ENCODE measurements at regions of chr3 and their contacts with region 1.

Region 1: DNA sequence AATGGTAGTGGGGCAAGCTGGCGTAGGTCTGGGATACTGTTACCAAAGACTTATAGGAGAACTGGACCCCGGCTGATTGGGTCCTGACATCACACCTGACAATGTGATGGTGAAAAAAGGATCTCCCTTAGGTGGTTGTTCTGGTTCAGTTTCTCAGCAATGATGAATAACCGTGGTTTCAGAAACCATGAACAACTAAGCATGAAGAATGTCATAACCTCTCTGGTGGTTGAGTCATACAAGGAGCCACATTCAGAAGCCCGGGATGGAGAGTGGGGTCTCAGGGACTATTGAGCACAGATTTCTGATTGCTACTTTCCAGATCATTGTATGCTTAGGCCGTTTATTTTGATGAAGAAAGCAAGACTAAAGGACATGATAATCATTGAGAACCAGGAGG is 17.4 kb downstream of the GPR160 start:
- DNase-seq: peak; percentile 45
- ATAC-seq: peak; percentile 70
- H3K4me3 Mint-ChIP-seq: no peak overlapping the region
- H3K27ac Mint-ChIP-seq: no peak overlapping the region
- H3K4me1 Mint-ChIP-seq: peaks cover 41% of the 10 kb centered on the region
- H3K27me3 Mint-ChIP-seq: no peaks in the 10 kb centered on the region

Region 2: GRCh38 chr3:169812332-169813235 is 242.6 kb before region 1 on chr3 and contains the starts of genes LRRC34 and LRRIQ4:
- CTCF ChIA-PET with region 1: no interaction called
- POLR2A ChIA-PET with region 1: no interaction called
- intact Hi-C with region 1: loop called in 1 of 2 experiments (anchors 5 kb)
- DNase-seq: peak; percentile 90
- ATAC-seq: peak; percentile 77
- H3K4me3 Mint-ChIP-seq: peak within 1 kb of the TSS; percentile 77
- H3K27ac Mint-ChIP-seq: peak within 1 kb of the TSS; percentile 82
- H3K4me1 Mint-ChIP-seq: peaks cover 27% of the 10 kb centered on the region
- H3K27me3 Mint-ChIP-seq: peaks cover 2% of the 10 kb centered on the region
- total RNA-seq, gene LRRC34: 3.8 TPM
- total RNA-seq, gene LRRIQ4: 0.09 to 0.12 TPM

Region 3: DNA sequence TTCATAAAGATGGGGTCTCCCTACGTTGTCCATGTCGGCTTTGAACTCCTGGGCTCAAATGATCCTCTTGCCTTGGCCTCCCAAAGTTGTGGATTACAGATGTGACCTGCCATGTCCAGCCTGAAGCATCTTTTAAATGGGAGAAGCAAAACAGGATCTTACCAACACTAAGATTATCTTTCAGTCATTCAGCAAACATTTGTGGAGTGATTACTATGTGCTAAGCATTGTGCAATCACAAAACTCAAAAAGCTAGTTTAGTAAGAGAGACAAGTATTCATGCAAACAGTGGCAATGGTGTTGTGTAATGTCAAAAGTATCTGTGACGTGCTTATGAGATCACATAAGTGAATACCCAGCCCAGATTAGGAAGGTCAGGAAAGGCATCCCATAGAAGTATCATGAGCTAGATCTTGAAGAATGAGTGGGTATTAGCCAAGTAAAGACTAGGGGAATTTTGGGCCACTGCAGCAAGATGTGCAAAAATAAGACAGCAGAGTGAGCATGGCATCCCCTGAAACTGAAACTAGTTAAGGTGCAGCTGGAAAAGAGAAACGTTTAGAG is 56.6 kb before region 1 on chr3:
- CTCF ChIA-PET with region 1: no interaction called
- POLR2A ChIA-PET with region 1: no interaction called
- intact Hi-C with region 1: loop called (anchors 1 to 2 kb)
- DNase-seq: peak; percentile 24
- ATAC-seq: peak; percentile 61
- H3K4me3 Mint-ChIP-seq: no peak overlapping the region
- H3K27ac Mint-ChIP-seq: peak overlapping the region; percentile 89
- H3K4me1 Mint-ChIP-seq: peaks cover 35% of the 10 kb centered on the region
- H3K27me3 Mint-ChIP-seq: no peaks in the 10 kb centered on the region

Region 4: GRCh38 chr3:170089862-170090600 is 34.8 kb after region 1 on chr3:
- CTCF ChIA-PET with region 1: no interaction called
- POLR2A ChIA-PET with region 1: no interaction called
- intact Hi-C with region 1: loop called in 1 of 2 experiments (anchors 5 kb)
- DNase-seq: no peak
- ATAC-seq: peak; percentile 58
- H3K4me3 Mint-ChIP-seq: no peak overlapping the region
- H3K27ac Mint-ChIP-seq: peak overlapping the region; percentile 42
- H3K4me1 Mint-ChIP-seq: peaks cover 9% of the 10 kb centered on the region
- H3K27me3 Mint-ChIP-seq: no peaks in the 10 kb centered on the region

Region 5: DNA sequence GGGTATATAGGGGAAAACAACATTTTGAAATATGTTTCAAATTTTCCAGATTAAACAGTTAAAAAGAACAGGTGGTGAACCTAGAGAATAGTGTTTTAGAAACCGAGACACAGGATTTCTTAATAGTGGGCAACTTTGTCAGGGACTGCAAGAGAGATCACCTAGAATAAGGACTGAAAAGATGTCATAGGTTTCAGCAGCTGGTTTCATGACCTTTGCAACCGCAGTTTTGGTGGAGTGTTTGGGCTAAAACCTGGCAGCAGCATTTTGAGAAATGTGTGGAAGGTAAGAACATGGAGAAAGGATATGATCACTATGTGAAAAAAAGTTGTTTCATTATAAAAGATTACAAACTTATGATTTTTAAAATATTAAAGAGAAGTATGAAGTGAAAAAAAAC is 201.9 kb after region 1 on chr3:
- CTCF ChIA-PET with region 1: no interaction called
- POLR2A ChIA-PET with region 1: no interaction called
- intact Hi-C with region 1: loop called in 1 of 2 experiments (anchors 2 kb)
- DNase-seq: peak; percentile 59
- ATAC-seq: peak; percentile 66
- H3K4me3 Mint-ChIP-seq: no peak overlapping the region
- H3K27ac Mint-ChIP-seq: peak overlapping the region; percentile 58
- H3K4me1 Mint-ChIP-seq: peaks cover 43% of the 10 kb centered on the region
- H3K27me3 Mint-ChIP-seq: no peaks in the 10 kb centered on the region

Region 6: DNA sequence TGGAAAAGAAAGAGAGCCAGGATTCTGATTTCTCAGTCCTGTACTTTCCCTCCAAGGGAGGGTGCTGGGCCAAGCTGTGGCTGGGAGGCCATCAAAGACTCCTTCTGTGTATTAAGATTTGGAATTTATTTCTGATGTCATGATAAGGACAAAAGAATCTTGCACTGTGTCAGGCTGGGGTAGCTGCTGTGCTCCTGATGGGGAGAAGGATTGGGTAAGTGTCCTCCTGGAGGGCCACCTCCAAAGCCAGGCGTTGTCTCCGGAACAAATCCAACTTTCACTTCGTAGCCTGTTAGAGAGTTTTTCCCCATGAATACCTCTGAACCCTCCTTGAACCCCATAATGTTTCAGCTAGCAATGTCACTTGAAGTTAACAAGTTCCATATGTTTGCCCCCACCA is 393.4 kb after region 1 on chr3:
- CTCF ChIA-PET with region 1: no interaction called
- POLR2A ChIA-PET with region 1: no interaction called
- intact Hi-C with region 1: no loop called
- DNase-seq: no peak
- ATAC-seq: no peak
- H3K4me3 Mint-ChIP-seq: no peak overlapping the region
- H3K27ac Mint-ChIP-seq: no peak overlapping the region
- H3K4me1 Mint-ChIP-seq: no peaks in the 10 kb centered on the region
- H3K27me3 Mint-ChIP-seq: no peaks in the 10 kb centered on the region

Measured in activated CD4-positive, alpha-beta T cell treated with anti-CD3 and anti-CD28 coated beads for 36 hours (primary cell).